PC-9 (cell line): ENCODE measurements at regions of chr5 and their contacts with region 1.

Region 1: DNA sequence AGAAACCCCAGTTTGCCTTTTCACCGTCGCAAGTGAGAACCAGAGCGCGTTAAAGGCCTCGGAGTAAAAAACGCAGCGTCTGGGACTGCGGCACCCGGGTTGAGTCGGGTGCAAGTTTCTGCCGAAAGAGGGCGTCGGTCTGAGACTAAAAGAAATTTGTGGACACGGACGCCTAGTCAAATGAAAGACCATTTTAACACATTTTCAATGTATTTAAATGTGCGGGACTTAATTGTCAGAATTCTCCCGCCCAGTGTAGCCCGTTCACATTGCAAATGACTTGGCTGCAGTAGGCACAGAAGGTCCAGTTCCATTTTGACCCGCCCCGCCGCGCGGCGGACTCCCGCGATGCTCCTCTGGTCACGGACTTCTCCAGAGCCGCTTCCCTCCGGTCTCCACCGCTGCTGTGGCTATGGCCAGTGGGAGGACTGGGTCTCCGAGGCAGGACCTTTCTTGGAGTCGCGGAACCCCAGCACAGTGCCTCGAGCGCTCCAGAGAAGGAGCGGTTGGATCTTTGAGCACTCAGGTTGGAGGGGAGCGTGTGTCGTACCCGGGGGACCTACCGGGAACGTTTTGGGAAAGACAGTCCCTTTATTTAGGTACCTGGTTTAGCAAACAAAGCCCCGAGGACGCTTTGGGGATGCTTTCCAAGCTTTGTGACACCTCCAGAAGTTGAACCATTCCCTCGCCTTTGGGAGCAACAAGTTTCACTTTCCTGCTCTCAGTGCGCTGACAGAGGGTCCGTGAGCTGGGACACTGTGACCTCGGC is 1.2 kb upstream of the NPR3 start:
- DNase-seq: peak; percentile 45 to 82
- H3K4me3 ChIP-seq: peak overlapping the region; percentile 72
- H3K27ac ChIP-seq: no peak overlapping the region
- H3K4me1 ChIP-seq: peaks cover 19% of the 10 kb centered on the region; the same call in 1 of the 2 replicates
- H3K27me3 ChIP-seq: peaks cover 18% of the 10 kb centered on the region
- CTCF ChIP-seq: peak; percentile 80

Region 2: DNA sequence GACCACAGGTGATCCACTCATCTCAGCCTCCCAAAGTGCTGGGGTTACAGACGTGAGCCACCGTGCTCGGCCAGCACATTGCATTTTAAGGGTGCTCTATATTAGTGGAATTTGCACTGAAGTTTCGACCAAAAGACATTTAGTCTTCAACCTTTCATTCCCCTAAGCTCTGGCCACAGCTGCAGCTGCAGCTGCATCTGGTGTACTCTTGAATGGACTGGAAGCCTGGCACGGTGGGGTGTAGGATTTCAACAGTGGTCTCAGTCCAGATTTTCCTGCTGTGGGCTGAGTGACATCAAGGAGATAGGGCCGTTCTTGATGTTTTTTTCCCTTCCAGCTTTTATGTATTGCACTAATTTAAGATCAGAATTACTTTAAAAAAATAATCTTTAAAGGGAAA is 815.8 kb before region 1 on chr5:
- CTCF ChIA-PET with region 1: no interaction called
- POLR2A ChIA-PET with region 1: no interaction called
- intact Hi-C with region 1: no loop called
- DNase-seq: no peak
- H3K4me3 ChIP-seq: no peak overlapping the region
- H3K27ac ChIP-seq: no peak overlapping the region
- H3K4me1 ChIP-seq: no peaks in the 10 kb centered on the region
- H3K27me3 ChIP-seq: peaks cover 77% of the 10 kb centered on the region
- CTCF ChIP-seq: no peak

Region 3: GRCh38 chr5:32613050-32613672 is 96.8 kb before region 1 on chr5:
- CTCF ChIA-PET with region 1: no interaction called
- POLR2A ChIA-PET with region 1: no interaction called
- intact Hi-C with region 1: loop called (anchors 5 kb)
- DNase-seq: peak; percentile 62 to 86
- H3K4me3 ChIP-seq: no peak overlapping the region
- H3K27ac ChIP-seq: no peak overlapping the region
- H3K4me1 ChIP-seq: no peaks in the 10 kb centered on the region
- H3K27me3 ChIP-seq: no peaks in the 10 kb centered on the region
- CTCF ChIP-seq: peak; percentile 100

Region 4: GRCh38 chr5:32785611-32786216 is 75.7 kb after region 1 on chr5:
- CTCF ChIA-PET with region 1: interaction called, 4 read pairs
- POLR2A ChIA-PET with region 1: no interaction called
- intact Hi-C with region 1: loop called (anchors 1 kb)
- DNase-seq: peak; percentile 91 to 96
- H3K4me3 ChIP-seq: peak overlapping the region; percentile 25; the same call in 1 of the 2 replicates
- H3K27ac ChIP-seq: peak overlapping the region; percentile 77
- H3K4me1 ChIP-seq: peaks cover 28% of the 10 kb centered on the region
- H3K27me3 ChIP-seq: peaks cover 45% of the 10 kb centered on the region
- CTCF ChIP-seq: no peak

Region 5: DNA sequence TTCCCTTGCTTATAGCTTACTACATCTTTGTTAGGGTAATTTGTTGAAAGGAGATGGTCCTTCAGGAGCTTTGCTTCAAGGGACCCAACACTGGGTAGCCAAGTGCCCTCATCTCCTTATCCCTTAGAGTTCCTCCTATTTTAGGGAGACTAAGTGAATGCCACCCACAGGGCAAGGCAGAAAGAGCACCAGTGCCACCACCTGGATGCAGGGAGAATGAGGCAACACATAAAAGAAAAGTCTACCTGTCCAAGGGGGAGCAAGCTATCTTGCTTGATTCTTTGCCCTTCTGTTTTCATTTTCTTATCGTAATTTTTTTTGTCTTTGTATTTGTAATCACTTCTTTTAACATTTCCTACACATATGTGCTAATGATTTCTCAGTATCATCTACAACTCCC is 206.7 kb after region 1 on chr5:
- CTCF ChIA-PET with region 1: no interaction called
- POLR2A ChIA-PET with region 1: no interaction called
- intact Hi-C with region 1: loop called (anchors 1 kb)
- DNase-seq: peak in 1 of 2 experiments; percentile 65
- H3K4me3 ChIP-seq: no peak overlapping the region
- H3K27ac ChIP-seq: no peak overlapping the region
- H3K4me1 ChIP-seq: no peaks in the 10 kb centered on the region
- H3K27me3 ChIP-seq: no peaks in the 10 kb centered on the region
- CTCF ChIP-seq: peak; percentile 82

Region 6: DNA sequence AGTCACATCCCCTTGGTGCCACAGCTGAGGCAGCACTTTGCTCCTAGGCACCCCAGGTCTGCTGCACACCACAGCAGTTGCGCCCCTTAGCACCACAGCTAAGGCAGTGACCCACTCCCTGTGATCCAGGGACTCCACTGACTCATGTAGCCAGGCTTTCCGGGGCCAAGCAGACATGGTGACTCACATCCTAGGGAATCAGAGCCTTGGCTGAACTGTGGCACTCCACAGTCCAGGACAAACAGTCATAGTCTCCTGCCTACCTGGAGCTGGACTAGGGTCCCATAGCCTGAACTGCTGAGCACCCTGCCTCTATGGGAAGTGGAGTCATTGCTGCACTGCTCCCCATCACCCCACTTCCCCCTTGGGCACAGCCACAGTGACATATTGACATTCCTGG is 339.9 kb after region 1 on chr5:
- CTCF ChIA-PET with region 1: interaction called, 3 read pairs
- POLR2A ChIA-PET with region 1: no interaction called
- intact Hi-C with region 1: loop called (anchors 1 kb)
- DNase-seq: peak; percentile 58 to 86
- H3K4me3 ChIP-seq: no peak overlapping the region
- H3K27ac ChIP-seq: peak overlapping the region; percentile 41
- H3K4me1 ChIP-seq: peaks cover 32% of the 10 kb centered on the region
- H3K27me3 ChIP-seq: no peaks in the 10 kb centered on the region
- CTCF ChIP-seq: no peak

Region 7: DNA sequence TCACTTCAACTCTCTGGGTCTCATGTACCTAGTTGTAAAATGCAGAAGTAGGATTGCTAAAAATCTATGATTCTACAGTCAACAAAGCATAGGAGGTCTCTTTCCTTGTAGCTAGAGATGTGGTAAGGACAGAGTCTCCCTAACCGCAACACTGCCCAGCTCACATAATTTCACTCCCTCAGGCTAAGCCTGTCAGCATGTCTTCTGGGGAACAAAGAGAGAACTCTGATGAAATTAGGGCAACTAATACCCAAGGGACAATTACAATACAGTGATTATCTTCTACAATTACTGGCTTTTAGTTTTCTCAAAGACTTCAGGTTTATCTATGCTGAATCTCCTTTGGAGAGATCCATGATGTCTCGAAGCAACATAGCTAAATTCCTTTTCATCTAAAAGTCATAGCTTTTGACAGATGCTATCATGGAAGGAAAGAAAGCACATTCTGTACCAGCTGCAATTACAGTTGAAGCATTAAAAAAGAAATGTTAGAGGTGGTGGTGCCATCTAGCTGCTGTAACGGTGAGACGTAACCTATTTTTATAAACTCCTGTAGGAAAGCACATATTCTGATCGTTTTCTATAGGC is 589.8 kb after region 1 on chr5:
- CTCF ChIA-PET with region 1: interaction called, 4 read pairs
- POLR2A ChIA-PET with region 1: no interaction called
- intact Hi-C with region 1: loop called (anchors 1 kb)
- DNase-seq: peak in 1 of 2 experiments; percentile 37
- H3K4me3 ChIP-seq: no peak overlapping the region
- H3K27ac ChIP-seq: no peak overlapping the region
- H3K4me1 ChIP-seq: no peaks in the 10 kb centered on the region; the same call in 1 of the 2 replicates
- H3K27me3 ChIP-seq: no peaks in the 10 kb centered on the region
- CTCF ChIP-seq: peak; percentile 77

Region 8: GRCh38 chr5:34411470-34412384 is 1701.8 kb after region 1 on chr5:
- CTCF ChIA-PET with region 1: interaction called, 12 read pairs
- POLR2A ChIA-PET with region 1: no interaction called
- intact Hi-C with region 1: no loop called
- DNase-seq: no peak
- H3K4me3 ChIP-seq: no peak overlapping the region
- H3K27ac ChIP-seq: no peak overlapping the region
- H3K4me1 ChIP-seq: peaks cover 14% of the 10 kb centered on the region; the same call in 1 of the 2 replicates
- H3K27me3 ChIP-seq: no peaks in the 10 kb centered on the region
- CTCF ChIP-seq: no peak